HepG2 (cell line): ENCODE measurements at regions of chr15 and their contacts with region 1.

Region 1: GRCh38 chr15:25345943-25346342 is 92.9 kb downstream of the UBE3A start:
- DNase-seq: peak; percentile 14
- ATAC-seq: peak; percentile 92
- H3K4me3 ChIP-seq: no peak overlapping the region
- H3K27ac ChIP-seq: no peak overlapping the region
- H3K4me1 ChIP-seq: no peaks in the 10 kb centered on the region
- H3K27me3 ChIP-seq: no peaks in the 10 kb centered on the region
- CTCF ChIP-seq: peak; percentile 46
- EP300 ChIP-seq: no peak
- POLR2A ChIP-seq: no peak
- RAD21 ChIP-seq: no peak

Region 2: GRCh38 chr15:25438601-25439368 is 92.8 kb after region 1 on chr15 and contains the start of gene UBE3A:
- CTCF ChIA-PET with region 1: no interaction called
- POLR2A ChIA-PET with region 1: no interaction called
- in situ Hi-C with region 1: no loop called
- intact Hi-C with region 1: loop called (anchors 5 kb)
- DNase-seq: peak; percentile 78
- ATAC-seq: peak; percentile 93
- H3K4me3 ChIP-seq: peak within 1 kb of the TSS; percentile 95 to 98 (median 95)
- H3K27ac ChIP-seq: peak within 1 kb of the TSS; percentile 99
- H3K4me1 ChIP-seq: peaks cover 35% of the 10 kb centered on the region
- H3K27me3 ChIP-seq: no peaks in the 10 kb centered on the region
- CTCF ChIP-seq: peak; percentile 55
- EP300 ChIP-seq: no peak
- POLR2A ChIP-seq: peak; percentile 84 to 94
- RAD21 ChIP-seq: no peak
- total RNA-seq, gene UBE3A: 77.8 and 80.5 TPM in 2 replicates